HEK293 (cell line): ENCODE measurements at regions of chrX and their contacts with region 1.

Region 1: GRCh38 chrX:135973548-135974278 is at the start of gene MMGT1:
- H3K4me3 ChIP-seq: peak within 1 kb of the TSS; percentile 90
- H3K27ac ChIP-seq: peak within 1 kb of the TSS; percentile 90
- H3K4me1 ChIP-seq: no peaks in the 10 kb centered on the region
- CTCF ChIP-seq: peak; percentile 69

Region 2: GRCh38 chrX:136055651-136056221 is 82.0 kb after region 1 on chrX:
- CTCF ChIA-PET with region 1: no interaction called
- POLR2A ChIA-PET with region 1: interaction called, 12 read pairs
- H3K4me3 ChIP-seq: no peak overlapping the region
- H3K27ac ChIP-seq: peak overlapping the region; percentile 91; the same call in 1 of the 2 replicates
- H3K4me1 ChIP-seq: peaks cover 12% of the 10 kb centered on the region
- CTCF ChIP-seq: no peak